ENCODE measurements at regions of chr6 and their contacts with region 1.

Region 1: GRCh38 chr6:112163295-112164257 is 76.2 kb downstream of the FAM229B start:
- DNase-seq: peak in 7 of 10 donors; percentile 26 to 88 (median 69)

Region 2: DNA sequence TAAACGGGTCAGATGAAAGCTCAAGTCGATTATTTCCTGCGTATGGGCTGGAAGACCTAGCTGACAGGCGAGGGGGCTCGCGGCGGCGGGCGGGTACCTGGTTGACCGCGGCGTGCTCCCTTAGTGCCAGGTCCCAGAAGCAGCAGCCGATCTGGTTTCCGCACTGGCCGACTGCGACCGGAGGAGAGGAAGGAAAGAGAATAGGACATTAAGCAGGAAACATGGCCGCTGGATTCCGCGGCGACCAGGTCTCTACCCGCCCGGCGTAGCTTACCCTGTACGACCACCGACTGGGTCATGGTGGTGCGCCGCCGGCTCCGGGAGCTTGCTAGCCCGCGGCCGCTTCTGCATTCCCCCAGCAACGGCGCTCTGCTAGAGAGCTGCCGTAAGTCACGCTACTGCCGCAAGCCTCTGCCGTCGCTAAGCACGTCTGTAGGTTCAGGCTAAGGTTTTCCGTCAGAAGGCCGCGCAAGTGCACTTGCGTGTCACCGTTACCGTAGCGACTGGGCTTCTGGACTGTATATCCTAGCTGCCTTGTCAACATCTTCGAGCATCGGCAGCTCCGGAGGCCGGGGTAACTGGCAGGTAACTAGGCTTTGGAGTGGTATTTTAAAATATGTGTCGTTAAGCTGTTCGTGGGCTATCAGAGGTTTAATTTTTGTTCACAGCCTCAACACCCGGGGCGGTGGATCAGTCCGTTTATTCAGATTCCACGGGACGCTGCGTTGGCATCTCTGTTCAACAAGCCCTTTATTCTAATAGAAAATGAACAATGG is 76.3 kb before region 1 on chr6 and contains the starts of genes FAM229B and TUBE1:
- intact Hi-C with region 1: loop called (anchors 2 kb)
- DNase-seq: peak; percentile 88 to 99 (median 93)

Region 3: GRCh38 chr6:112253841-112254816 is 90.6 kb after region 1 on chr6 and contains the start of gene LAMA4:
- intact Hi-C with region 1: no loop called
- DNase-seq: peak in 9 of 10 donors; percentile 32 to 92 (median 43)

Region 4: GRCh38 chr6:113281014-113281413 is 1117.4 kb after region 1 on chr6:
- intact Hi-C with region 1: no loop called
- DNase-seq: no peak

Measured in posterior cingulate gyrus (tissue), 11 donors.